ENCODE measurements at regions of chr12 and their contacts with region 1.

Region 1: DNA sequence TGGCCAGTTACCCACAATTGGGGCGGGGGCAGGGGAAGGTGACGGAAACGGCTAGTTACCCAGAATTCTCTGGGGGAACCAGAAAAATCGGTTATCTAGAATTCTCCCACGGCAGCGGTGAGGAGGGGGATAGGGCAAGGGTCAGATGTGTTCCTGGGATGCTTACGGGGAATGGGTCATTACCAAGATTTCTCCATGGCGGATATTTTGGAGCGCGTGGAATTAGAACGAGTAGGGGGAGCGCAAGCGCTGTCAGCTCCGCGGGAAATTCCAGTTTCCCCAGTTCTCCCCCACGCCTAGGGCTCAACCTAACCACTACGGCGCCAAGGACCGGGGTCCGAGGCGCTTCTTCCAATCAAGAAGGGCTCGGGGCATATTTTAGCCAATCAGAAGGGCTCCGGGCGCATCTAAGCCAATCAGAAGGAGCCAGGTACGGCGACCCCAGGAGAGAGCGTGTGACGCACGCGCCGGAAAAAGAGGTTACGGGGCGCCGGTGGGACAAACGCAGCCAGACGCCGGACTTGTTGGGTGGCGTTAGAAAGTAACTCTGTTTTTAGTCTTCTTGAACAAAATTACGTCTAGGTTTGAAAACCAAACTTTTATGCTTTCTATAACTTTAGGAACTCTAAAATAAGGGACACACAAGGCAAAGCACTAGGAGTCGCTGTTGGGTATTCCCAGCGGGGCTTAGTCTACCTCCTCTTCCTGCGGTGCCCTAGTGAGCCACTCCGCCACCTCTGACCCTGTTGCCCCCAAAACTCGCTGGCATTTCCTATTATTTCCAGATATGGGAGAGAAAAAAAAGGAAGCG is at the start of gene PAN2:
- DNase-seq: peak; percentile 95
- H3K4me3 Mint-ChIP-seq: peak within 1 kb of the TSS; percentile 93
- H3K27ac Mint-ChIP-seq: peak within 1 kb of the TSS; percentile 99
- H3K4me1 Mint-ChIP-seq: peaks cover 46% of the 10 kb centered on the region
- H3K27me3 Mint-ChIP-seq: no peaks in the 10 kb centered on the region
- total RNA-seq, gene PAN2: 61.3 to 64.2 TPM

Region 2: GRCh38 chr12:56299853-56300643 is 33.8 kb before region 1 on chr12 and contains the start of gene CS:
- CTCF ChIA-PET with region 1: no interaction called
- POLR2A ChIA-PET with region 1: interaction called, 17 read pairs
- DNase-seq: peak; percentile 99
- H3K4me3 Mint-ChIP-seq: peak within 1 kb of the TSS; percentile 95
- H3K27ac Mint-ChIP-seq: peak within 1 kb of the TSS; percentile 84
- H3K4me1 Mint-ChIP-seq: peaks cover 50% of the 10 kb centered on the region
- H3K27me3 Mint-ChIP-seq: no peaks in the 10 kb centered on the region
- total RNA-seq, gene CS: 188 to 193 TPM

Region 3: GRCh38 chr12:56315622-56316473 is 18.0 kb before region 1 on chr12 and contains the start of gene CNPY2:
- CTCF ChIA-PET with region 1: interaction called, 7 read pairs
- POLR2A ChIA-PET with region 1: interaction called, 50 read pairs
- DNase-seq: peak; percentile 94
- H3K4me3 Mint-ChIP-seq: peak within 1 kb of the TSS; percentile 96
- H3K27ac Mint-ChIP-seq: peak within 1 kb of the TSS; percentile 94
- H3K4me1 Mint-ChIP-seq: peaks cover 21% of the 10 kb centered on the region
- H3K27me3 Mint-ChIP-seq: no peaks in the 10 kb centered on the region
- total RNA-seq, gene CNPY2: 95.0 to 99.3 TPM

Region 4: GRCh38 chr12:56321027-56321426 is 12.9 kb before region 1 on chr12:
- CTCF ChIA-PET with region 1: interaction called, 7 read pairs
- POLR2A ChIA-PET with region 1: interaction called, 50 read pairs
- DNase-seq: no peak
- H3K4me3 Mint-ChIP-seq: no peak overlapping the region
- H3K27ac Mint-ChIP-seq: no peak overlapping the region
- H3K4me1 Mint-ChIP-seq: peaks cover 12% of the 10 kb centered on the region
- H3K27me3 Mint-ChIP-seq: no peaks in the 10 kb centered on the region

Region 5: GRCh38 chr12:56346703-56347102 is 12.8 kb after region 1 on chr12:
- CTCF ChIA-PET with region 1: interaction called, 11 read pairs
- POLR2A ChIA-PET with region 1: interaction called, 15 read pairs
- DNase-seq: no peak
- H3K4me3 Mint-ChIP-seq: no peak overlapping the region
- H3K27ac Mint-ChIP-seq: no peak overlapping the region
- H3K4me1 Mint-ChIP-seq: peaks cover 2% of the 10 kb centered on the region
- H3K27me3 Mint-ChIP-seq: no peaks in the 10 kb centered on the region

Region 6: GRCh38 chr12:56398324-56398723 is 64.4 kb after region 1 on chr12:
- CTCF ChIA-PET with region 1: no interaction called
- POLR2A ChIA-PET with region 1: no interaction called
- DNase-seq: no peak
- H3K4me3 Mint-ChIP-seq: no peak overlapping the region
- H3K27ac Mint-ChIP-seq: no peak overlapping the region
- H3K4me1 Mint-ChIP-seq: no peaks in the 10 kb centered on the region
- H3K27me3 Mint-ChIP-seq: peaks cover 3% of the 10 kb centered on the region

Region 7: DNA sequence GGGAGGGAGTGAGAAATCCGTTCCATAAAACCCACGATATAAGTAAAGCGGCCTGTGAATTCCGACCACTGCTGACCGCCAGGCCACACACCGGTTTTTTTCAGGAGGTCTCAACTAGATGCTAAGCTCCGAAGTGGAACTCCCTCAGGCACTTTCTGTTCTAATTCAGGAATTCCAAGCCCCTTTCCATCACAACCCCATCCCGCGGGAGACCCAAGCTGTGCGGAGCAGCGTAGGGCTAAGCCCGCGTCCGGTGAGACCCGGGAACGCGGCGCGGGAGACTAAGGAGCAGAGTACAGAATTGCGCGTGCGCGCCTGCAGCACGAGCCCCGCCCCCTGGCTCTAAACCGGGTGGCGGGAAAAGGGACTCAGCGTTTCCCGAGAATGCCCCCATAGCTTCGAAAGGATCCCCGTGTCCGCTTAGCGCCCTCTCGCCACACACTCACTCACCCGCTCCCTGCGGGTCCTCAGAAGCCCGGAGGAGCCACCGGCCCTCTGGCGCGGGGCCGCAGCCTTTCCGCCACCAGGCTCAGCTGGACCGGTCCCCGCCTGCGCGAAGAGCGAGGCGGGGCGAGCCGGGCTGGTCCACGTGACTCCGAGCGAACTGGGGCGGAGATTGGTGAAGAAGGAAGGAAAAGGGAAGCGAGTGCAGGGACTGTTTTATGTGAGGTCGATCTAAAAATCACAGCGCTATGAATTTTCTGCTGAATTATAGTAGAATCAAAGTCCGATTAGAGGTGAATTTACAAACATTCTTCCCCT is 115.2 kb after region 1 on chr12 and contains the start of gene TIMELESS:
- CTCF ChIA-PET with region 1: no interaction called
- POLR2A ChIA-PET with region 1: interaction called, 17 read pairs
- DNase-seq: peak; percentile 87
- H3K4me3 Mint-ChIP-seq: peak within 1 kb of the TSS; percentile 89
- H3K27ac Mint-ChIP-seq: peak within 1 kb of the TSS; percentile 81
- H3K4me1 Mint-ChIP-seq: peaks cover 36% of the 10 kb centered on the region
- H3K27me3 Mint-ChIP-seq: peaks cover 4% of the 10 kb centered on the region
- total RNA-seq, gene TIMELESS: 44.1 to 45.6 TPM

Region 8: GRCh38 chr12:56468216-56469006 is 134.5 kb after region 1 on chr12 and contains the start of gene SPRYD4:
- CTCF ChIA-PET with region 1: interaction called, 10 read pairs
- POLR2A ChIA-PET with region 1: interaction called, 7 read pairs
- DNase-seq: peak; percentile 96
- H3K4me3 Mint-ChIP-seq: peak within 1 kb of the TSS; percentile 94
- H3K27ac Mint-ChIP-seq: peak within 1 kb of the TSS; percentile 94
- H3K4me1 Mint-ChIP-seq: peaks cover 29% of the 10 kb centered on the region
- H3K27me3 Mint-ChIP-seq: no peaks in the 10 kb centered on the region
- total RNA-seq, gene SPRYD4: 2.9 to 3.1 TPM

Region 9: GRCh38 chr12:56630160-56630632 is 296.3 kb after region 1 on chr12 and contains the start of gene BAZ2A:
- CTCF ChIA-PET with region 1: no interaction called
- POLR2A ChIA-PET with region 1: no interaction called
- DNase-seq: peak; percentile 91
- H3K4me3 Mint-ChIP-seq: peak within 1 kb of the TSS; percentile 92
- H3K27ac Mint-ChIP-seq: peak within 1 kb of the TSS; percentile 86
- H3K4me1 Mint-ChIP-seq: peaks cover 69% of the 10 kb centered on the region
- H3K27me3 Mint-ChIP-seq: no peaks in the 10 kb centered on the region
- total RNA-seq, gene BAZ2A: 121 to 126 TPM